ENCODE measurements at regions of chr9 and their contacts with region 1.

Region 1: DNA sequence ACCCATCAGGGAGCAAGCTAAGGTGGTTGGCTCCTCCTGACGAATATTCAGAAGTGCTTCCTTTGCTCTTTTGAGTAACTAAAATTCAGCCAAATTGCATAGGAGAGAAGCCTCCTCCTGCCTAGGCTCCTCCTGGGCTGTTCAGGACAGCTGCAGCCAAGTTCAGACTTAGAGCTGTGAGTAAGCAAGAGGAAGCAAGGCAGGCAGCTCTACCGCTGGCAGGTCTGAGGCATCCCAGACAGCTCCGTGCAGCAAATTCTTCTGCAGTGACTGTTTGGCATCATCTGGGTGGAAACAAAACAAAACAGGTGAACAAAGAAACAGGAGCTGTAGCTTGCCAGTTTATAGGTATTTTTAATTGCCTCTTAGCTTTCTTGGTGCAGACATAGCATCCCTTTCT is 421.0 kb downstream of the GADD45G start:
- DNase-seq: no peak
- ATAC-seq: peak; percentile 79 to 95 (median 94)
- H3K4me3 ChIP-seq: no peak overlapping the region
- H3K27ac ChIP-seq: peak overlapping the region; percentile 3
- H3K4me1 ChIP-seq: peaks cover under 1% of the 10 kb centered on the region
- H3K27me3 ChIP-seq: no peaks in the 10 kb centered on the region
- CTCF ChIP-seq: no peak

Region 2: GRCh38 chr9:89574736-89575135 is 451.1 kb before region 1 on chr9:
- intact Hi-C with region 1: no loop called
- DNase-seq: no peak
- ATAC-seq: no peak
- H3K4me3 ChIP-seq: no peak overlapping the region
- H3K27ac ChIP-seq: no peak overlapping the region
- H3K4me1 ChIP-seq: no peaks in the 10 kb centered on the region
- H3K27me3 ChIP-seq: peaks cover 0 to 3% (median 2%) of the 10 kb centered on the region in 3 donors
- CTCF ChIP-seq: no peak

Region 3: DNA sequence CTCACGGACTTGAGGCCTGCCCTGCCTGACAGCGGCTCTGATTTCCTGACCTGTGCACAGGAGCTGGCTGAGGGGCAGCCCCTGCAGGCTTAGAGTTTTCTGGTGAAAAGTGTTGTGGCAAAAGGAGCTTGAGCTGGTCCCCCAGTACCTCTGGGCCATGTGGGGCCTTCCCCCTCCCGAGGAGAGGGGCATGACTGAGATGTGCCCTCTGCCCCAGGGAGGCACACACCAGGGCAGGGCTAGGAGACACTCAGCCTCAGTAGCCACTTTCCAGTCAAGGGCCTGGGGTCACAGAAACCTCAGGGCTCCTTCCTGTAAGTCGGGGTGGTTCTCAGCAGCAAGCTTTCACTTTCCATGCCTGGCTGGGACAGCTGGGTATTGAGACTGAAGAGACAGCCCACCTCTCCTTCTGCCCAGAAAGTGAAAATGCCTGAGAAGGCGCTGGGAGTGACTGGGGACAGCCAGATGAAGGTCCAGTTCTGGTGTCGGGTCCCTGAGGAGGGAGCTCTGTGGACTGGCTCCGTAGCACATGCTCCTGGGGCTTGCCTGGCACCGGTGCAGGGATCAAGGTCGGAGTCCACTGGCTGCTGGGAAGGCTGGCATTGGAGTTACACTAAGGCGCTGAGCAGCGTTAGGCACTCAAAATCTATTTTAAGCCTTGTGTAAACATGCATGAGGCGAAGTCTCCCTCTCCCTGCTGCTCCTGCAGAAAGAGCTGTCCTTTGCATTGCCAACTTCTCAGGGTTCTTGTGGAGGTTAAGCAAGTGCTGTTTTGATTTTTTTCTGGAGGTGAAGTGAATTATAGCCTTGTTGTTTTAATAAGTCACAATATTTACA is 26.1 kb before region 1 on chr9:
- intact Hi-C with region 1: loop called in 1 of 2 experiments (anchors 2 kb)
- DNase-seq: peak; percentile 67 to 87
- ATAC-seq: peak; percentile 88 to 95 (median 92)
- H3K4me3 ChIP-seq: peak overlapping the region; percentile 17
- H3K27ac ChIP-seq: peak overlapping the region; percentile 82
- H3K4me1 ChIP-seq: peaks cover 52% of the 10 kb centered on the region
- H3K27me3 ChIP-seq: no peaks in the 10 kb centered on the region
- CTCF ChIP-seq: no peak

Measured in psoas muscle (tissue), 8 donors.